OCI-LY7 (cell line): ENCODE measurements at regions of chr2 and their contacts with region 1.

Region 1: GRCh38 chr2:200713003-200713703 is 98.6 kb upstream of the BZW1 start:
- DNase-seq: peak; percentile 98
- H3K4me3 ChIP-seq: peak overlapping the region; percentile 50
- H3K27ac ChIP-seq: peak overlapping the region; percentile 43
- H3K4me1 ChIP-seq: peaks cover 15% of the 10 kb centered on the region
- CTCF ChIP-seq: peak; percentile 97

Region 2: DNA sequence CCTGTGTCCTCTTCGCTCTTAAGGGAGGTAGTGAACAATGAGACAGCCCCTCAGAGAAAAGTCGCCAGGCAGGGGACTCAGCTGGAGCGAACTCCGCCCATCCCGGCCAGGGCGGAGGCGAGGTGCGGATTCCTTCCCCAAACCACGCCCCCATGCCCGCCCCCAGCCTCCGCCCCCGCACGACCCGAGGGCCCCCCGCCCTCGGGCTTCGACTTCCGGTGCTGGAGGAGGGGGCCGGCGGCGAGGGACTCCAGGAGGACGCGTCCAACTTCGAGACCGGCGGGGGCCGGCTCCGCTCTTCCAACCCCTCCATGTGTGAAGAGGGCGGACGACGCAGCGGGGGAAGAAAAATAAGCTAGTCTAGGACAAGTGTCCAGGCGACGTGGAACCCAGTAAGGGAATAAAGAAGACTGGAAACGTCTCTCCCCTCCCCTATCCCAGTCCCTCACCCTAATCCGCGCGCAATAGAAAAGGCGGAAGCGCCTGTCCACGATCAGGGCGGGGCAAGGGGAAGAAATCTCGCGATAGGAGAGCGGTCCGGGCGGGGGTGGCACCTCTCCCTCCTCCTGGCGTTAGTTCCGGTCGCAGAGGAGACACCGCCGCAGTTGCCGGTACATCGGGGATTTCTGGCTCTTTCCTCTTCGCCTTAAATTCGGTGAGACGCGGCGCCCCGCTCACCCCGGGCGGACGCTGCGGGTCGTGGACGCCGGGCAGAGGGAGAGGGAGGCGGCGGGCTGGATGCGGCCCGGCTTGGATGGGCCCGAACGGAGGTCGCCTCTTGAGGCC is 98.4 kb after region 1 on chr2 and contains the start of gene BZW1:
- CTCF ChIA-PET with region 1: no interaction called
- POLR2A ChIA-PET with region 1: interaction called, 8 read pairs
- intact Hi-C with region 1: loop called (anchors 1 kb)
- DNase-seq: peak; percentile 98
- H3K4me3 ChIP-seq: peak within 1 kb of the TSS; percentile 93
- H3K27ac ChIP-seq: peak within 1 kb of the TSS; percentile 78
- H3K4me1 ChIP-seq: peaks cover 28% of the 10 kb centered on the region
- CTCF ChIP-seq: no peak
- total RNA-seq, gene BZW1: 177 and 180 TPM in 2 replicates

Region 3: DNA sequence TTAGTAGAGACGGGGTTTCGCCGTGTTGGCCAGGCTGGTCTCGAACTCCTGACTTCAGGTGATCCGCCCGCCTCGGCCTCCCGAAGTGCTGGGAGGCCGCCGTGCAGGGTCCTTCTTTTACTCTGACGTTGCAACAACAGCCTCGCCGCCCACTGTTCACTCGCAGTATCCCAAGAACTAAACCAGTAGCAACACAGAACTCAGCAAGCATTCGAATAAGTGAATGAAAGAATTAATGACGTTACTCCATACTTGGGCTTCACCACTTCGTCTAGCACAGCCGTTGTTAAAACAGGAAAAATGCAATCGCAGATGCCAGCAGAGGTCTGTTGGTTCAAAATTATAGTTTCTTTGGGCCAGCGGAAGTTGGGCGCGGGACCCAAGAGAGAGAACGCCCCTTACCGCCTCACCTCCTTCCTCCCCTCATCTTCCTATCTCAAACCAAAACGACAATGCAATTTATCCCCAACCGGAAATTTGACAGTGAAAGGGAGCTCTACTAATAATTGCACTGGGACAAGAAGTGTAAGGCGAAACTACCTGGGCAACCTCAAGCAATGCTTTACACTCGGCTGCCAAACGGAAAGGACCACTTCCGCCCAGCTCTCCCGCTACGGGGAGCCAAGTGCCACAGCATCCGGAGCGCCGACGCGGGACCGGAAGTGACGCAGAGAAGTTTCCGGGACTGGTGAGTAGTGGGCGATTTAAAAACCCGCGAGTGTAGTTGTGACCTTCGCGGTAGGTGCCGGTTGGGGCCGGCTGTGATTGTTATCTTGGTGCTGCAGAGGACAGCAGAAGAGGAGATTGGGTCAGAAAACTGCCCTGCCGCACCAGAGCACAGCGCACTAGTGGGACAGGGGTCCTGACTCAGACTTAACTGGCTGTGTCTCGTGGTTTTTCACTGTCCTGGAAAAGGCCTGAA is 175.8 kb after region 1 on chr2 and contains the starts of genes NIF3L1 and PPIL3:
- CTCF ChIA-PET with region 1: no interaction called
- POLR2A ChIA-PET with region 1: interaction called, 7 read pairs
- intact Hi-C with region 1: loop called (anchors 1 kb)
- DNase-seq: peak; percentile 99
- H3K4me3 ChIP-seq: peak within 1 kb of the TSS; percentile 90
- H3K27ac ChIP-seq: peak within 1 kb of the TSS; percentile 98
- H3K4me1 ChIP-seq: peaks cover 52% of the 10 kb centered on the region
- CTCF ChIP-seq: peak; percentile 39; the same call in 1 of the 2 replicates
- total RNA-seq, gene NIF3L1: 37.5 and 68.4 TPM in 2 replicates
- total RNA-seq, gene PPIL3: 49.4 and 54.4 TPM in 2 replicates

Region 4: DNA sequence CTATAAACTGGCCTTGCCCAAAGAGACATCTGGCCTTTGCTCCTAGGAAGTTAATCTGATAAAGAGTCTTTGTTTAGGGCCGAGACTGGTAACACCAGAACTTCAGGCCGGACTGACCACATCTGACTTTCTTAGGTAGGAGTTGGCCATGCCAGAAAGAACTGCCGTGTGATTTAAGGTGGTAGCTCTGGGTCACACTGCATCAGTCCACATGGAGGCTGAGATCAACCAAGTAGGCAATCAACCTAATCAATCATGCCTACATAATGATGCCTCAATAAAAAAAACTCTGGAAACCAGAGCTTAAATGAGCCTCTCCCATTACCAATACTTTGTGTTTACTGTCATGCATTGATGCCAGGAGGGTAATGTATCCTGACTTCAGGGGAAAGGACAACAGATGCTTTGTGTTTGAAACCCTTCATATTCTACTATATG is 294.4 kb after region 1 on chr2:
- CTCF ChIA-PET with region 1: no interaction called
- POLR2A ChIA-PET with region 1: no interaction called
- intact Hi-C with region 1: no loop called
- DNase-seq: no peak
- H3K4me3 ChIP-seq: no peak overlapping the region
- H3K27ac ChIP-seq: no peak overlapping the region
- H3K4me1 ChIP-seq: no peaks in the 10 kb centered on the region
- CTCF ChIP-seq: no peak

Region 5: DNA sequence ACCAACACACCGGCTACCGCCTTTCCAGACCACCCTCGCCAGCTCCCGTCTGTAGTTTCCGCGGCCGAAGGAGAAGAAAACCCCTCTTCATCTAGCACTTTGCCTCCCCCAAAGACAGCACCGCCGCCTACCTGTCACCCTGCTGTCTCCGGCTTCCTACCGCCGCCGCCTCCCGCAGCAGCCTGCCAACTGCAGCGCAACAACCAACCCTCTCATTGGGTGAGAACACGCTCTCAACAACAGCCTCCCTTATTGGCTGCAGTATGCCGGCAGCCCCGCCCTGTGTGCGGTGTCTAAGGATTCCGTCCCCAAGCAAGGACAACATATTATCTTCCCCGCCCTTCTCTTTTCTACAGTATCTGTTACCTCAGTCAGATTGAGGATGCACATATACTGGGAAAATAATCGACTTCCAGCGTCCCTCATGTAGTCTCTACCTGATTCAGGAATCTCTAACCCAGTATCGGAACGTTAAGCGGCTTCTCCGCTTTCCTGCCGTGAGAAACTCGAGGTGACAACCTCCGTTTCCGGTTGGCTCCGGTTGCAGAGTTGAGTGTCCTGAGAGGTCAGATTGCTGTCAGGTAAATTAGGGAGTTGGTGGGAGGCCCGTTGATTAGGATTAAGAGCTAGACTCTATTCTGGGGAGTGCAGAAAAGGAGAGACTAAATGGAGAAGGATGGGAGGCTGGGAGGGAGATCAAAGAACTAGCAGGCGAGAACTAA is 358.5 kb after region 1 on chr2 and contains the starts of genes HYCC2 and NDUFB3:
- CTCF ChIA-PET with region 1: no interaction called
- POLR2A ChIA-PET with region 1: no interaction called
- intact Hi-C with region 1: loop called (anchors 1 kb)
- DNase-seq: peak; percentile 96
- H3K4me3 ChIP-seq: peak within 1 kb of the TSS; percentile 74
- H3K27ac ChIP-seq: peak within 1 kb of the TSS; percentile 58
- H3K4me1 ChIP-seq: peaks cover 39% of the 10 kb centered on the region
- CTCF ChIP-seq: peak; percentile 53; the same call in 1 of the 2 replicates
- total RNA-seq, gene HYCC2: 8.6 and 8.8 TPM in 2 replicates
- total RNA-seq, gene NDUFB3: 90.5 and 134 TPM in 2 replicates

Region 6: DNA sequence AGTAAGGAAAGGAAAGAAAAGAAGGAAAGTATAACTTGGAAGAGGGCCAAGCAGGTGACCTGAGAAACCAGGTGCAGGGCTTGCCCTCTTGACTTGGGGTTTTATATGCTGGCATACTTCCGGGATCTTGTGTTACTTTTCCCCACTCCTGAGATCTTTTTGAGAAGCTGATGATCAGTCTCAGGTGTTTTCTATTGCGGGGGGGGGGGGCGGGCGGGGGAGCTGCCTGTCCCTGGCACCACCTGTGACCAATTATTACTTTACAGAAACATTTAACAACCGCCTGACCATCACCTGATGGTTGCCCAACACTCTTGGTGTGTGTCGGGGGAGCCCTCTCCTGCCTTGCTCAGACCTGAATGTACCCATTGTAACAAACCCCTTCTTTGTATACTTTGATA is 462.9 kb after region 1 on chr2:
- CTCF ChIA-PET with region 1: no interaction called
- POLR2A ChIA-PET with region 1: no interaction called
- intact Hi-C with region 1: loop called (anchors 5 kb)
- DNase-seq: no peak
- H3K4me3 ChIP-seq: no peak overlapping the region
- H3K27ac ChIP-seq: no peak overlapping the region
- H3K4me1 ChIP-seq: peaks cover 6% of the 10 kb centered on the region
- CTCF ChIP-seq: no peak